ENCODE measurements at regions of chr10 and their contacts with region 1.

Region 1: DNA sequence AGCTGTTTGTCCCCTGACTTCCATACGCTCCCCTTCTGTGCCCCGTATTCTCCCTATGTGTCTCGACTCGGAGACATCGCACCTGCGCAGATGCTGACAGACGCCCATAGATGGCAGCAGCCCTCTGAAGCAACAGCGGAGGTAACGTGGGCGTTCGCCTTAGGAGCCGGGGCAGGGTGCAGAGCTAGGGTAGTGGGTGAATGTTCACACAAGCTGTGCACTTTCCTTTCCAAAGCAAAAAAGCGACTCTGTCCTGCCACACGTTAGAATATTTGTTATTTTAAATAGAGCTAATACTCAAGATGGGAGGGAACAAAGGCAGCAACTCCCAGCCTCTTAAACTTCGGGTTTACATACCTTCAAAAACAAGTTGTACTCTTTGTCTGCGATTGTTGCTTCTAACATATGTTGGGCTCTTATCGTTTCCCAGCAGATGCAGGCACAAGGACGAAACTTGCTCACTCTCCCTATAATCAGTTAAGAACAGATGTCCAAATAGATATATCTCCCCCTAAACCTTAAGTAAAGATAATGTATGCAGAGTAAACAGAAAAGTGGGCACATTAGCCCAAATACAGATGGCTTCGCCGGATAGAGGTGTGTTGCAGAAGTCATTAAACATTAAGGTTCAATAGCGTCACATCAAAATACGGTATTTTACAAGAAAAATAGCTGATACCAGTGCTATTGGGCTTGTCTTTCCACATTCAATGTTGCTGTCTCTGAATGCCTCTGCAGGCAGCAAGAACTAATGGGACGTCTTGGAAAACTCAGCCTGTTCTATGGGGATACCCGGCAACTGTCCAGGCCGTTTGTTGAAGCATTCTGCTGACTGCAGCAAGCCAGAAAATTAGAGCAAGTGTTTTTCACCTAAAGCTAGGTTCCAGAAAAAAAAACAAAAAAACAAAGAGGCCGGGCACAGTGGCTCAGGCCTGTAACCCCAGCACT is 340.3 kb upstream of the PRKCQ start:
- DNase-seq: peak; percentile 83 to 97 (median 88)
- H3K4me3 ChIP-seq: peak overlapping the region in 4 of 7 experiments; percentile 13 to 60 (median 49)
- H3K27ac ChIP-seq: peak overlapping the region in 1 of 2 experiments; percentile 43
- H3K4me1 ChIP-seq: peaks cover 11 to 40% (median 31%) of the 10 kb centered on the region in 4 experiments
- H3K27me3 ChIP-seq: no peaks in the 10 kb centered on the region

Region 2: GRCh38 chr10:7121154-7121810 is 200.9 kb after region 1 on chr10:
- CTCF ChIA-PET with region 1: interaction called, 43 read pairs
- POLR2A ChIA-PET with region 1: no interaction called
- DNase-seq: peak; percentile 60 to 77 (median 73)
- H3K4me3 ChIP-seq: no peak overlapping the region
- H3K27ac ChIP-seq: no peak overlapping the region
- H3K4me1 ChIP-seq: peaks cover 0 to 5% (median 0%) of the 10 kb centered on the region in 4 experiments
- H3K27me3 ChIP-seq: no peaks in the 10 kb centered on the region

Region 3: DNA sequence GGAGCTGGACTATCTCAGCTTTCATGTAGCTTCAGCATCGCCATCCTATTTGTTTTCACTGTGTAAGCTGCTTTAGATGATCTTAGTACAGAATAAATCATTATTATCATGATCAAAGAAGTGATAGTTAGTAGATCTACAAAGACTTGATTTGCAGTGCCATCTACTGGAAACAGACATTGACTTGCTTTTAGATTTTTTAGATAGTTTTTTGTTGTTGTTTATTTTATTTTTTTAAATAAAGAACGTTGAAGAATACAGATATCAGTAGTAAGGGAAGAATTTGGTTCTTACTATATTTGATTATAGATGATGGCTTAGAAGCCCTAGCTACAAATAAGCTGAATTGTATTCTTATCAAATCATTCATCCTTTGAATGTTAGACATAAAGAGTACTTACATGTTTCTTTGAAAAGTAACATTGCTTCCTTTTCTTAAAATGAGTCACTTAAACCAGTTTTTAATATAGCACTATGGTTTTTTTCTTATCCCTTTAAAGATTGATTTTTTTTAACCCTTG is 496.8 kb after region 1 on chr10:
- CTCF ChIA-PET with region 1: interaction called, 14 read pairs
- POLR2A ChIA-PET with region 1: no interaction called
- DNase-seq: peak; percentile 59 to 77 (median 75)
- H3K4me3 ChIP-seq: no peak overlapping the region
- H3K27ac ChIP-seq: no peak overlapping the region
- H3K4me1 ChIP-seq: peaks cover 0 to 9% (median 9%) of the 10 kb centered on the region in 4 experiments
- H3K27me3 ChIP-seq: peaks cover 0 to 26% (median 13%) of the 10 kb centered on the region in 5 experiments